ENCODE measurements at regions of chr2 and their contacts with region 1.

Region 1: GRCh38 chr2:41033131-41033530 is 581.2 kb upstream of the SLC8A1 start:
- DNase-seq: no peak
- H3K4me3 ChIP-seq: no peak overlapping the region
- H3K27ac ChIP-seq: no peak overlapping the region
- H3K4me1 ChIP-seq: no peaks in the 10 kb centered on the region
- H3K27me3 ChIP-seq: no peaks in the 10 kb centered on the region
- CTCF ChIP-seq: no peak
- POLR2A ChIP-seq: no peak

Region 2: GRCh38 chr2:41709702-41710599 is 676.8 kb after region 1 on chr2:
- CTCF ChIA-PET with region 1: no interaction called
- POLR2A ChIA-PET with region 1: no interaction called
- dilution Hi-C with region 1: no loop called
- intact Hi-C with region 1: loop called (anchors 5 kb)
- DNase-seq: no peak
- H3K4me3 ChIP-seq: no peak overlapping the region
- H3K27ac ChIP-seq: no peak overlapping the region
- H3K4me1 ChIP-seq: no peaks in the 10 kb centered on the region
- H3K27me3 ChIP-seq: no peaks in the 10 kb centered on the region
- CTCF ChIP-seq: no peak
- POLR2A ChIP-seq: no peak